Spleen (tissue), 13 donors: ENCODE measurements at regions of chr13 and their contacts with region 1.

Region 1: GRCh38 chr13:110412132-110412914 is 105.2 kb downstream of the COL4A2 start:
- DNase-seq: peak; percentile 84
- H3K4me3 ChIP-seq: no peak overlapping the region
- H3K27ac ChIP-seq: peak overlapping the region in 7 of 8 donors; percentile 16 to 72 (median 55)
- H3K4me1 ChIP-seq: peaks cover 0 to 80% (median 40%) of the 10 kb centered on the region in 6 donors
- H3K27me3 ChIP-seq: peaks cover 0 to 54% (median 0%) of the 10 kb centered on the region in 7 donors
- CTCF ChIP-seq: peak; percentile 71 to 93 (median 85)
- POLR2A ChIP-seq: no peak

Region 2: GRCh38 chr13:108961542-108962125 is 1450.7 kb before region 1 on chr13:
- intact Hi-C with region 1: loop called (anchors 5 kb)
- DNase-seq: no peak
- H3K4me3 ChIP-seq: no peak overlapping the region
- H3K27ac ChIP-seq: no peak overlapping the region
- H3K4me1 ChIP-seq: peaks cover 0 to 6% (median 0%) of the 10 kb centered on the region in 6 donors
- H3K27me3 ChIP-seq: no peaks in the 10 kb centered on the region
- CTCF ChIP-seq: peak; percentile 55 to 91 (median 81)
- POLR2A ChIP-seq: no peak

Region 3: GRCh38 chr13:110225609-110226562 is 186.4 kb before region 1 on chr13:
- intact Hi-C with region 1: loop called (anchors 10 kb)
- DNase-seq: no peak
- H3K4me3 ChIP-seq: no peak overlapping the region
- H3K27ac ChIP-seq: peak overlapping the region in 7 of 8 donors; percentile 49 to 82 (median 75)
- H3K4me1 ChIP-seq: peaks cover 4 to 76% (median 28%) of the 10 kb centered on the region in 6 donors
- H3K27me3 ChIP-seq: peaks cover 0 to 9% (median 0%) of the 10 kb centered on the region in 7 donors
- CTCF ChIP-seq: no peak
- POLR2A ChIP-seq: no peak

Region 4: GRCh38 chr13:110306960-110307746 is 105.2 kb before region 1 on chr13 and contains the starts of genes COL4A1 and COL4A2:
- intact Hi-C with region 1: loop called (anchors 10 kb)
- DNase-seq: no peak
- H3K4me3 ChIP-seq: peak within 1 kb of the TSS; percentile 46 to 73 (median 52)
- H3K27ac ChIP-seq: peak within 1 kb of the TSS; percentile 54 to 87 (median 85)
- H3K4me1 ChIP-seq: peaks cover 6 to 53% (median 17%) of the 10 kb centered on the region in 6 donors
- H3K27me3 ChIP-seq: peaks cover 0 to 93% (median 27%) of the 10 kb centered on the region in 7 donors
- CTCF ChIP-seq: no peak
- POLR2A ChIP-seq: no peak
- total RNA-seq, gene COL4A1: 251 to 959 (median 365) TPM
- total RNA-seq, gene COL4A2: 296 to 712 (median 410) TPM

Region 5: GRCh38 chr13:110853235-110853721 is 441.0 kb after region 1 on chr13:
- intact Hi-C with region 1: no loop called
- DNase-seq: no peak
- H3K4me3 ChIP-seq: no peak overlapping the region
- H3K27ac ChIP-seq: no peak overlapping the region
- H3K4me1 ChIP-seq: peaks cover 0 to 10% (median 0%) of the 10 kb centered on the region in 6 donors
- H3K27me3 ChIP-seq: peaks cover 0 to 13% (median 0%) of the 10 kb centered on the region in 7 donors
- CTCF ChIP-seq: no peak
- POLR2A ChIP-seq: no peak

Region 6: GRCh38 chr13:111153279-111153976 is 741.1 kb after region 1 on chr13:
- intact Hi-C with region 1: no loop called
- DNase-seq: peak; percentile 97
- H3K4me3 ChIP-seq: peak overlapping the region; percentile 56 to 93 (median 83)
- H3K27ac ChIP-seq: peak overlapping the region; percentile 92 to 98 (median 96)
- H3K4me1 ChIP-seq: peaks cover 11 to 53% (median 38%) of the 10 kb centered on the region in 6 donors
- H3K27me3 ChIP-seq: no peaks in the 10 kb centered on the region
- CTCF ChIP-seq: peak in 5 of 11 experiments; percentile 5 to 56 (median 37)
- POLR2A ChIP-seq: peak in 2 of 3 donors; percentile 61 to 82